ENCODE measurements at regions of chr14 and their contacts with region 1.

Region 1: DNA sequence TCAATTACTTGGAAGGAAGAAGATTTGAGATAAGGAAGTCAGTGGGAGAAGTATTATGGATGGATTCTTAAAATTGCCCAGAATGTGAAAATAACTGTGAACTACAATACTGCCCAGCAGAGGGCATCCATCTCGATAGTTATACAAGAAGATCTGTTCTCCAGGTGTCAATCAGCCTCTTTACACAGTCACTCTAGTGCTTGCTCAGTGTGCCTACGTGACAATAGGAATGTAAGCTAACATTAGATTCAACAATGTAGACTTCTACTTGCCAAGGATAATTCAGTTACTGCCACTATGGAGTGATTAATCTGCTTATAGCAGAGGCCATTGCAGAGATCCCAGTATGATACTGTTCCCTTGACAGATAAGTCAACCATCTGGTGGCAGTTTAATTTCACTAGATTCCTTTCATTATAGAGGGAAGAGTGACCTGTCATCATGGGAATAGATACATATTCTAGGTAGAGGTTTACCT is 10.6 kb upstream of the MAP4K5 start:
- DNase-seq: peak; percentile 33 to 59
- ATAC-seq: peak; percentile 52 to 82; a peak in 4 of 6 replicates
- H3K4me3 ChIP-seq: no peak overlapping the region
- H3K27ac ChIP-seq: no peak overlapping the region
- H3K4me1 ChIP-seq: no peaks in the 10 kb centered on the region
- CTCF ChIP-seq: peak; percentile 64
- EP300 ChIP-seq: no peak
- POLR2A ChIP-seq: no peak
- RAD21 ChIP-seq: peak; percentile 48 to 49

Region 2: GRCh38 chr14:50321009-50321660 is 221.8 kb before region 1 on chr14:
- CTCF ChIA-PET with region 1: interaction called, 11 read pairs
- POLR2A ChIA-PET with region 1: no interaction called
- DNase-seq: peak; percentile 74 to 91
- ATAC-seq: peak; percentile 98 to 100
- H3K4me3 ChIP-seq: peak overlapping the region; percentile 34
- H3K27ac ChIP-seq: peak overlapping the region; percentile 57 to 64; a peak in 5 of 6 replicates
- H3K4me1 ChIP-seq: peaks cover 11% of the 10 kb centered on the region
- CTCF ChIP-seq: peak; percentile 88
- EP300 ChIP-seq: no peak
- POLR2A ChIP-seq: no peak
- RAD21 ChIP-seq: peak; percentile 68 to 70

Region 3: GRCh38 chr14:50520947-50521815 is 21.8 kb before region 1 on chr14:
- CTCF ChIA-PET with region 1: no interaction called
- POLR2A ChIA-PET with region 1: no interaction called
- DNase-seq: peak; percentile 59 to 66
- ATAC-seq: peak; percentile 81 to 82
- H3K4me3 ChIP-seq: no peak overlapping the region
- H3K27ac ChIP-seq: peak overlapping the region; percentile 30 to 61; a peak in 5 of 6 replicates
- H3K4me1 ChIP-seq: peaks cover 26% of the 10 kb centered on the region
- CTCF ChIP-seq: no peak
- EP300 ChIP-seq: no peak
- POLR2A ChIP-seq: no peak
- RAD21 ChIP-seq: no peak

Region 4: DNA sequence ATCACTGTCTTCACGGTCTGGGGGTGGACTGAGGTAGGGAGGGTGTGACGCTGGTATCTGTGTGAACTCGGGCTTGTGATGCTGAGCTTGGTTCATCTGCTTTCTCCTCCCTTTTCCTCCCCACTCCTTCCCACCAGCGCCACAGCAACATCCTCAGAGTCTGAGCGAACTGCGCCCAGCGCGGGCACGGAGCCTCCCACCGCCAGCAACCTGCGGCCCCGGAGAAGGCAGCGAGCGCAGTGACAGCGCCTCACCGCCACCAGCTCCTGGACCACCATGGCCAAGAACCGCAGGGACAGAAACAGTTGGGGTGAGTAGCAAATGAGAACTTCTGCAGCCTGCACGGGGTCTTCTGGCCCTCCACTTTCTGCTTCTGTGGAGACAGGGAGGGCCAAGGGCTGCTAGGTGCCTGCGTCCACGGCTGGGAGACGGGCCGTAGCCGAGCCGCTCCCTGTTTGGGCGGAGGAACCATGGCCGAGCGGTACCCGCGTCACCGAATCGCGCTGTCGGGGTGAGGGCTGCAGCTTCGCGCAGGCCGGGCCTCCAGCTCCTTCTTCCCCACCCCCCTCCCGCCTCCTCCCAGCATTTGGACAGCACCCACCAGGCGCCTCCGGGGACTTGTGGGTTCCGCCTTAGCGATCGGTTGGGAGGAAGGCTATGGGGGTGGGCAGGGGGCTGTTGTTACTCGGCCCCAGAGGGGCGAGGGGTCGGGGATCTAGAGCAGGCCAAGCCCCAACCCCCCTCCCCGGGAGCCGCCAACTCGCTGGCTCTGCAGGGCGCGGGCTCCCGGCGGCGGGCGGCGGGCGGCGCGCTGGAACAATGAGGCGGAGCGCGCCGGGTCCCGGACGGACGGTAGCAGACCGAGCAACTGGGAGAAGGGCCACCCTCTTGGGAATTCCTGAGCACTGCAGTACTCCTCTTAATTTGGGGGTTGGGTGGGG is 17.3 kb after region 1 on chr14 and contains the start of gene ATL1:
- CTCF ChIA-PET with region 1: interaction called, 14 read pairs
- POLR2A ChIA-PET with region 1: no interaction called
- DNase-seq: peak; percentile 48 to 70
- ATAC-seq: peak; percentile 91 to 93
- H3K4me3 ChIP-seq: peak within 1 kb of the TSS; percentile 62
- H3K27ac ChIP-seq: peak within 1 kb of the TSS; percentile 65 to 90
- H3K4me1 ChIP-seq: peaks cover 6% of the 10 kb centered on the region; the same call in 1 of the 3 replicates
- CTCF ChIP-seq: no peak
- EP300 ChIP-seq: no peak
- POLR2A ChIP-seq: peak; percentile 29; the same call in 1 of the 2 replicates
- RAD21 ChIP-seq: no peak
- polyA plus RNA-seq, gene ATL1: 4.4 and 4.7 TPM in 2 replicates

Region 5: DNA sequence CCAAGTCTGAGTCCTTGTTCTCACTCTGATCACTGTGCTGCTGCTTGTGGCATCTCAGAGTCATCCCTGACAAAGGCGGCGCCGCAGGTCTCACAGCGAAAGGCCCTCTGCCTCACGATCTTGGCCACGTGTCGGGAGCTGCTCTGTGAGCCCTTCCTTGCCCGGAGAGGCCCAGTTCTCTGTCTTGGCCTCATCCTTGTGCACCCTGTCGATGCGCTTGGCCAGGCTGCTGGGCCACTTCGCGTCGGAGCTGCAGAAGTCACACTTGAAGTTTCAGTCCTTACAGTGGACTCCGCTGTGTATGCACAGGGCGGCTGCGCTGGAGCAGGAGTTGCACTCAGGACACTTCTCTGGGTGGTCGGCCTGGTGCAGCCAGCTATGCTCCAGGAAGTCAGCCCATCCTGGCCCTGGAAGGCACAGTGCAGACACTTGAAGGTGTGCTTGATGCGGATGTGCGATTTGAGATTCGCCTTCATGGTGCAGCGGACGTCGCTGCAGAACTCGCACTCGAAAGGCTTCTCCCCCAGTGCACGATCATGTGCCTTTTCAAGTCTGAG is 161.6 kb after region 1 on chr14:
- CTCF ChIA-PET with region 1: no interaction called
- POLR2A ChIA-PET with region 1: interaction called, 13 read pairs
- DNase-seq: no peak
- ATAC-seq: no peak
- H3K4me3 ChIP-seq: no peak overlapping the region
- H3K27ac ChIP-seq: no peak overlapping the region
- H3K4me1 ChIP-seq: no peaks in the 10 kb centered on the region
- CTCF ChIP-seq: no peak
- EP300 ChIP-seq: no peak
- POLR2A ChIP-seq: no peak
- RAD21 ChIP-seq: no peak

Region 6: DNA sequence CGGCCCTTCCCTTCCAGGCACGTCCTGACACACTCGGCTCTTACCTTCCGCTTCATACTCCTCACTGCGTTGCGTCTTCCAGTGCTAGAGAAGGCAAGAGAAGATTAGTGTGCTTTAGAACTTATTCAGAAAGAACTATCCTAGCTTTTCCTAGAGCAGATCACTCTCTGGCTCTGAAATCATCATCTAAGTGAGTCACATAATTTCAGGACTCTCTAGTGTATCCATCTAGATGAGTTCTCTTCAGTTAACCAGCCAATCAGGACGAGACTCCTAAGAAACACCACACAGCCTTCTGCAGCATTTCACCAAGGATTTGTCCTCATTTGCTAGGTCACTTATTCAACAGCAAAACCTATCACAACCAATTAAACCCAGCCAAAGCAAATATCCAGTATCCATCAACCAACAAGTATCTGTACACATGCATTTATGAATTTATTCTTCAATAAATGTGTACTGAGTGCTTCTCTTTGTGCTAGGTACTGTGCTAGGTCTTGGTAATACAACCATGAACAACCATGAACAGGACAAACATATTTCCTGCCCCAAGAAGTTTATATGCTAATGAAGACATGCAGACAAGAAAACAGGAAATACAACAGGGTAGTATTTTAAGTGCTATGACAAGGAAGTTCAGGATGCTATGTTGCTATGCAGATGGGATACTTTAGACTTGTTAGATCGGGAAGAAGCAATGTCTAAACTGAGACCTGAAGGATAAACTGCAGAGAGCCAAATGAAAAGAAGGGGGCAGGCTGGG is 235.9 kb after region 1 on chr14:
- CTCF ChIA-PET with region 1: interaction called, 36 read pairs
- POLR2A ChIA-PET with region 1: no interaction called
- DNase-seq: no peak
- ATAC-seq: no peak
- H3K4me3 ChIP-seq: no peak overlapping the region
- H3K27ac ChIP-seq: no peak overlapping the region
- H3K4me1 ChIP-seq: peaks cover 5% of the 10 kb centered on the region; the same call in 1 of the 3 replicates
- CTCF ChIP-seq: no peak
- EP300 ChIP-seq: no peak
- POLR2A ChIP-seq: no peak
- RAD21 ChIP-seq: no peak